HepG2 (cell line): ENCODE measurements at regions of chr1 and their contacts with region 1.

Region 1: DNA sequence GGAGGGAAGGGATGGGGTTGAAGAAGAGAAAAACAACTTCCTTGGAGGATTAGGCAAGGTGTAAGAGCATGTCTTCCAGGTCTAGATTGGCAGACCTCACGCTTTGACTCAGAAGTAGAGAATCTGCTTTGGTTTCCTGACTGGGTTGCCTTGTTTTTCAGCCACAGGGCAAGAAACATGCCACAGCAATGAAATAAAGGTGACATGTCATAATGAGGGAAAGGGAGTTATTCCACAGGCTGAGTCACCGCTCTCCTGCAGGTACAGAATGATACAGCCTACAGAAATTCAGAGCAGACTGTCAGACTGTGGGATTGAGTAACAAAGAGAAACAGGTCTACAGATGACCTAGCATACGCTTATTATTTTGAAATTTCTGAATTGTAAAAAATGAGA is 45.3 kb downstream of the IRF2BP2 start:
- DNase-seq: peak; percentile 66
- ATAC-seq: peak; percentile 59
- H3K4me3 ChIP-seq: no peak overlapping the region
- H3K27ac ChIP-seq: no peak overlapping the region
- H3K4me1 ChIP-seq: peaks cover 50% of the 10 kb centered on the region
- H3K27me3 ChIP-seq: no peaks in the 10 kb centered on the region
- CTCF ChIP-seq: no peak
- EP300 ChIP-seq: no peak
- POLR2A ChIP-seq: no peak
- RAD21 ChIP-seq: no peak

Region 2: DNA sequence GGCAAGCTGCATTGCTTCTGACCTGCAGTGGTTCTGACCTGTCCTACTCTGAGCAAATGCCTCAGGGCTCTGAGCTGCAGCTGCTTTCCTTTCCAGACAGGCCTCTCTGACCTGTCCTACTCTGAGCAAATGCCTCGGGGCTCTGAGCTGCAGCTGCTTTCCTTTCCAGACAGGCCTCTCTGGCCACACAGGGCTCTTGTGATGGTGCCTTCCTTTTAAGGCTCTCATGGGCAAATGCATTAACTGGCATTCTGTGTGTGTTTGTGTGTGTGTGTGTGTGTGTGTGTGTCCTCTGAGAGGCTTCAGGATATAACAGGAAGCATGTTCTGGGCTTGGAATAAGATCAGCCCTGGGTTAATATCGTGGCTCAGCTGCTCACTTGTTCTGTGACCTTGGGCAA is 1482.9 kb before region 1 on chr1:
- CTCF ChIA-PET with region 1: no interaction called
- POLR2A ChIA-PET with region 1: no interaction called
- in situ Hi-C with region 1: no loop called
- intact Hi-C with region 1: no loop called
- DNase-seq: no peak
- ATAC-seq: no peak
- H3K4me3 ChIP-seq: no peak overlapping the region
- H3K27ac ChIP-seq: no peak overlapping the region
- H3K4me1 ChIP-seq: no peaks in the 10 kb centered on the region
- H3K27me3 ChIP-seq: peaks cover 0 to 2% of the 10 kb centered on the region in 2 experiments; a peak in 2 of 5 replicates
- CTCF ChIP-seq: no peak
- EP300 ChIP-seq: no peak
- POLR2A ChIP-seq: no peak
- RAD21 ChIP-seq: no peak

Region 3: DNA sequence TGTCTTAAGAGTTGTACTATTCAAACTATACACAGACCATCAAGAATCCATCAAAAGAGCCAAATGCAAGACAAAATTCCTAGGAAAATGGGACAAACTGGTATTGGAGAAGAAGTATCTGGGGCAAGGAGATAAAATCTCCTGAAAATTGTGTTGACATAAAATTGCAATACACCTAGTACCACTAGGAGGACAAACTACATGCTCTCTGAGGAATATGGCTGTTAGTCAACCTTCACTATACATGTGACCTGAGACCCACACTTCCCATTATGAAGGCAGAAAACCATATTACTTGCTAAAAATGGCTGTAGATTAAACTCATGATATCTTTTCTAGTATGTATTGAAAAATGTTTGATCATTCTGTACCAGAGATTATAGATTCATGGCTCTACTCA is 15.3 kb after region 1 on chr1:
- CTCF ChIA-PET with region 1: no interaction called
- POLR2A ChIA-PET with region 1: no interaction called
- in situ Hi-C with region 1: no loop called
- intact Hi-C with region 1: loop called (anchors 2 kb)
- DNase-seq: no peak
- ATAC-seq: peak; percentile 57
- H3K4me3 ChIP-seq: no peak overlapping the region
- H3K27ac ChIP-seq: no peak overlapping the region
- H3K4me1 ChIP-seq: peaks cover 22% of the 10 kb centered on the region
- H3K27me3 ChIP-seq: peaks cover 0 to 3% of the 10 kb centered on the region in 2 experiments; a peak in 1 of 5 replicates
- CTCF ChIP-seq: no peak
- EP300 ChIP-seq: no peak
- POLR2A ChIP-seq: no peak
- RAD21 ChIP-seq: no peak